Activated CD4-positive, alpha-beta T cell treated with anti-CD3 and anti-CD28 coated beads for 36 hours (primary cell): ENCODE measurements at regions of chr7 and their contacts with region 1.

Region 1: DNA sequence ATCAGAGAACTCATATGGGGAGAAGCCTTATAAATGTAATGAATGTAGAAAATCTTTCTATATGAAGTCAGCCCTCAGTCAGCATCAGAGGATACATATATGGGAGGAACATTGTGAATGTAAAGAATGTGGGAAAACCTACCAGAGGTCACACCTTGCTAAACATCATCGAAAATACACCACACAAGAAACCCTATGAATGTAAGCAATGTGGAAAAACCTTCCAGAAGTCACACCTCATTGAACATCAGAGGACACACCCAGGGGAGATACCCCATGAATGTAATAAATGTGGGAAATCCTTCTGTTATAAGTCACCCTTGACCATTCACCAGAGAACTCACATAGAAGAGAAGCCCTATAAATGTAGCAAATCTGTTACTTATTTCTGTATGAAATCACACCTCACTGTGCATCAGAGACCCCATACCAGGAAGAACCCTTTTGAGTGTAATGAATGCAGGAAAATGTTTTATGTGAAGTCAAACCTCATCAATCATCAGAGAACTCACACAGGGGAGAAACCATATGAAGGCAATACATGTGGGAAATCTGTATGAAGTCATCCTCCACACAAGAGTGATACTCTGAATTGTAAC is 30.8 kb downstream of the ZNF12 start:
- DNase-seq: no peak
- ATAC-seq: no peak
- H3K4me3 Mint-ChIP-seq: no peak overlapping the region
- H3K27ac Mint-ChIP-seq: no peak overlapping the region
- H3K4me1 Mint-ChIP-seq: no peaks in the 10 kb centered on the region
- H3K27me3 Mint-ChIP-seq: no peaks in the 10 kb centered on the region

Region 2: DNA sequence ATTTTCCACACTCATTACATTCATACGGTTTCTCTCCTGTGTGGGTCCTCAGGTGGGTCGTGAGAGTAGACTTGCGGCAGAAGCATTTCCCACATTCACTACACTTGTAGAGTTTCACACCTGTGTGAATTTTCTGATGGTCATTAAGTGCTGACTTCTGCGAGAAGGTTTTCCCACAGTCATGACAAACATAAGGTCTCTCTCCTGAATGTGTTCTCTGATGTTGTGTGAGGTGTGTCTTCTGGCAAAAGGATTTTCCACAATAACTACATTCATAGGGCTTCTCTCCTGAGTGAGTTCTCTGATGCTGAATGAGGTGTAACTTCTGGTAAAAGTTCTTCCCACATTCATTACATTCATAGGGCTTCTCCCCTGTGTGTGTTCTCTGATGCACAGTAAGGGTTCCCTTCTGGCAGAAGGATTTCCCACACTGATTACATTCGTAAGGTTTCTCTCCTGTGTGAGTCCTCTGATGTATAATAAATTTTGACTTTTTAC is 15.8 kb after region 1 on chr7:
- CTCF ChIA-PET with region 1: interaction called, 3 read pairs
- POLR2A ChIA-PET with region 1: no interaction called
- intact Hi-C with region 1: loop called in 1 of 2 experiments (anchors 1 kb)
- DNase-seq: no peak
- ATAC-seq: peak; percentile 30
- H3K4me3 Mint-ChIP-seq: no peak overlapping the region
- H3K27ac Mint-ChIP-seq: peak overlapping the region; percentile 51
- H3K4me1 Mint-ChIP-seq: no peaks in the 10 kb centered on the region
- H3K27me3 Mint-ChIP-seq: no peaks in the 10 kb centered on the region